A673 (cell line): ENCODE measurements at regions of chr15 and their contacts with region 1.

Region 1: GRCh38 chr15:94163999-94164807 is 67.2 kb upstream of the MCTP2 start:
- DNase-seq: peak; percentile 76
- H3K4me3 ChIP-seq: no peak overlapping the region
- H3K27ac ChIP-seq: no peak overlapping the region
- H3K4me1 ChIP-seq: no peaks in the 10 kb centered on the region
- H3K27me3 ChIP-seq: no peaks in the 10 kb centered on the region
- CTCF ChIP-seq: peak; percentile 93

Region 2: GRCh38 chr15:94230956-94231722 is 66.9 kb after region 1 on chr15 and contains the start of gene MCTP2:
- CTCF ChIA-PET with region 1: no interaction called
- POLR2A ChIA-PET with region 1: no interaction called
- intact Hi-C with region 1: no loop called
- DNase-seq: peak; percentile 37
- H3K4me3 ChIP-seq: peak within 1 kb of the TSS; percentile 45
- H3K27ac ChIP-seq: no peak within 1 kb of the TSS
- H3K4me1 ChIP-seq: no peaks in the 10 kb centered on the region
- H3K27me3 ChIP-seq: peaks cover 21% of the 10 kb centered on the region
- CTCF ChIP-seq: 0 out of 2 replicates have a peak, but pooled peaks have one; percentile 24
- total RNA-seq, gene MCTP2: 0.19 and 0.33 TPM in 2 replicates

Region 3: DNA sequence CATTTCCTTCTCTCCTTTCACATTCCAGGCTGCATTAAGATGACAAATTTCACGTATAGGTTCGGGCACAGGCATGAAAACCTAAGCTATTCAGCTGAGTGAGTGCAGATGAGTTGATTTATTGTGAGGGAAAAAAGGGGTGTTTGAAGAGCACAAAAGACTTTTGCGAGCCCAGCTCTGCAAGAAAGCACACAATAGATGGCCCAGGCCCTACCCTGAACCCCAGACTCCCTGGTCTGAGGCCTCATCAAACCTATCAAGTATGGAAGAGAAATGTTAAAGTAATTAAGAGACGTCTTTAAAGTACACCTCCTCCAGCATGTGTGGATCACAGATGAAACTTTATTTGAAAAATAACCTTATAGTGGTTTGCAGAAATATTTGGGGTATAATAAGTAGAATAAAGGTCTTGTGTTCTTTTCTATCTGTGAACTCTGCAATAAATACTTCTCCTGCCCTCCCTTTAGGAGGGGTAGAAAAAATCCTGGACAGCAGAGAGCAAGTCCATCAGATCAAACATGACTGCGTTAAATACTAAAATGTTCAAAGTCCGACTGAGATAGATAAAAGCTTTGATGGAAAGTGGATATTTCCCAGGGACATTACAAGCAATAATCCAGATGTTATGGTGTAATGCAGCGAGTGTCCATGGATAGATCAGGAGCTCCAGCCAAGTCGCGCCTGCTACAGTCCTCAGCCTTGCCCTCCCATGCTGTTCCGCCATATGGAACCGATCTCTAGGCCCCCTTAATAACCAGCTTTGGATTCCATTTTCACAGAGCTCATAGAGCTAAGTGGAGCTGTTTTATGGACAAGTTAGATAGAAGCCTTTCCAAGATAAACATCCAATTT is 188.7 kb after region 1 on chr15:
- CTCF ChIA-PET with region 1: no interaction called
- POLR2A ChIA-PET with region 1: no interaction called
- intact Hi-C with region 1: no loop called
- DNase-seq: no peak
- H3K4me3 ChIP-seq: no peak overlapping the region
- H3K27ac ChIP-seq: no peak overlapping the region
- H3K4me1 ChIP-seq: no peaks in the 10 kb centered on the region
- H3K27me3 ChIP-seq: no peaks in the 10 kb centered on the region
- CTCF ChIP-seq: no peak

Region 4: DNA sequence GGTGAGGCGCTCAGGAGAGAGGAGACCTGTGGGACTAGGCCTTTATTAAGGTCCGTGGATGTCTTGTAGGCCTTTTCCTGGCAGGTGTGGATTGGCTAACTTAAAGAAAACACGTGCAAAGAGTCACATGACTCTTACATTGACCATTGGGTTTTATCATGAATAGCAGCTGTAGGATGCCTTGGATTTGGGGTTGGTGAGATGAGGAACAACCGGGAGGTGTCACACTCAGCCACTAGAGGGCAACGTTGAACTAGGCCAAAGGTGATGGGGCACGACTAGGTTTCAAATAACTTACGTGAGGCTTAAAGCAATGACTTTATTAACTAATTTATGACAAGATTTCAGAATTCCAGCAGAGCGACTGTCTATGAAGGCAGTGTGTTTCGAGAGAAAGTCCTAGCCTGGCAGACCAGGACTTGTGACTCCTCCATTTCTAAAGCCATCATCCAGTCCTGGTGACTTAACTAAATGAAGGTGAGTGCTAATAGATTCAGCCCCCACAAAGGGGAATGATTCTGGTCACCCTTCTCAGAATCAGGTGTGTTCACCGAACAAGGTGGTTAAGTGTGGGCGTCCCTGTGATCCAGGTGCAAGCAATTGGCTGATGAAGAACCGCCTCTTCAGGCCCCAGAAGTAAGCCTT is 412.8 kb after region 1 on chr15:
- CTCF ChIA-PET with region 1: no interaction called
- POLR2A ChIA-PET with region 1: no interaction called
- intact Hi-C with region 1: loop called (anchors 10 kb)
- DNase-seq: peak; percentile 63
- H3K4me3 ChIP-seq: no peak overlapping the region
- H3K27ac ChIP-seq: no peak overlapping the region
- H3K4me1 ChIP-seq: no peaks in the 10 kb centered on the region
- H3K27me3 ChIP-seq: no peaks in the 10 kb centered on the region
- CTCF ChIP-seq: peak; percentile 88

Region 5: GRCh38 chr15:95669146-95669939 is 1505.1 kb after region 1 on chr15:
- CTCF ChIA-PET with region 1: no interaction called
- POLR2A ChIA-PET with region 1: no interaction called
- intact Hi-C with region 1: no loop called
- DNase-seq: no peak
- H3K4me3 ChIP-seq: no peak overlapping the region
- H3K27ac ChIP-seq: no peak overlapping the region
- H3K4me1 ChIP-seq: no peaks in the 10 kb centered on the region
- H3K27me3 ChIP-seq: no peaks in the 10 kb centered on the region
- CTCF ChIP-seq: no peak